Activated CD4-positive, alpha-beta T cell treated with anti-CD3 and anti-CD28 coated beads, Interleukin-2, amount 10 ng/mL, durations not matched to agents 24 days and 14 days (primary cell): ENCODE measurements at regions of chr15 and their contacts with region 1.

Region 1: DNA sequence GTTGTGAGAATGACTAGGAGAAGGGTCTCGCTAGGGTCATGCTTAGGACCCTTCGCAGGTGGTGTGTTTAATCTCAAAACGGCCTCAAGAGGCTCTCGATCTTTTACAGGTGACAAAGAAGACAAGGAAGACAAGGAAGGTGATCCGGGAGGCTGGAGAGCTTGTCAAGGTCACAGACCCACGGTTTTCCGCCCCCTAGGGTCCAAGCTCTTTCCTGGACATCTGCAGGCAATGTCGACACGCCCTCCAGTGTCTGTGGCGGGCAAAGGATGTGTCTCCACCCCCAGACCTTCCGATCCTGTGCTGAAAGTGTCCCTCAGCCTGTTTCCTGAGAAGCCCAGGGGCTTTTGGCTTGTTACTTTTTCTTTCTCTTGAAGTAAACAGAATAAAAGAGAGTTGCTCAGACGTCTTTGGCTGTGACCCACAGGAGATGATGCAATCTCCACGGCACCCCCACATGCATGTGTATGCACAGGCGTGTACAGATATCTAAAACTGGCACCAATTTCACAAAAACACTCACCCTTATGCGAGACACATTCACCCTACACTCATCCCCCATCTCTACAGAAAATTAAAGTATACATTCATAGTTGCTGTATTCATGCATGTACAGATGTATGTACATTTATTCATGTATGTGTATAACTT is 108.8 kb downstream of the KLF13 start:
- DNase-seq: peak; percentile 96
- H3K4me3 Mint-ChIP-seq: peak overlapping the region; percentile 79
- H3K27ac Mint-ChIP-seq: peak overlapping the region; percentile 96
- H3K4me1 Mint-ChIP-seq: peaks cover 78% of the 10 kb centered on the region
- H3K27me3 Mint-ChIP-seq: no peaks in the 10 kb centered on the region

Region 2: DNA sequence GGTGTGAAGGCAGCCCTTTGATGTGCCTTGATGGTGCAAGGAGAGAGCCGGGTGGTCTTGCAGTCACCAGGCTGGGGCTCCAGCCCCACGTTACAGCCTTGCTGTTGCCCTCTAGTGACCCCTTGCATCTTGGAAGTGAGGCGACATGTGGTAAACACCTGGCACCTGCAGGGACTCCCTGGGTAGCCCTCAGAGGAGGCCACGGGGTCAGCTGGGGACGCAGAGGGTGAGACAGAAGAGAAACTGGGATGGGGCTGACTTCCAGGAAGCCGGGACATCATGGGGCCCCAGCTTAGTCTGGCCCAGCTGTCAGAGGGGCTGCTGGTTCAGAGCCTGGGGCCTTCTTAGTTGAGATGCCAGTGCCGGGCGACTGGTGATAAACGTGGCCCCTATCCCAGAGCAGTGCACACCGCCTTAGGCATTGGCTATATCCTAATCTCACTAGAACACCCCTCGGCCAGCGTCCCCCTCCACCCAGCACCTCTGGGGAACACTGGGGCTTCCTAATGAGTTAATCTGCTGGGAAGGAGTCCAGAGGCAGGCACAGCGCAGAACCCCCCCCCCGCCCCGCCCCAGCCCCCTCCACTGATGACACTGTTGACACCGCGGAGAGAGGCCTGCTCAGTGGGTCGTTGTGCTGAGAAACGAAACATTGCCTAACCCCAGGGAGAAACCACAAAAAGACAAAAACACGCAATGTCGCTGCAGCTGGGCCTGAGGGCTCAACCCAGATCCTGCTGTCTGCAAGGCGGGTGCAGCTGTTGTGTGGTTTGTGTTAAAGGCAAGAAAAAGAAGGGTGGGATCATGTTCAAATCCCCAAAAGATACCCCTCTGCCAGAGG is 169.3 kb before region 1 on chr15:
- intact Hi-C with region 1: loop called (anchors 1 kb)
- DNase-seq: peak; percentile 94
- H3K4me3 Mint-ChIP-seq: peak overlapping the region; percentile 68
- H3K27ac Mint-ChIP-seq: peak overlapping the region; percentile 78
- H3K4me1 Mint-ChIP-seq: peaks cover 87% of the 10 kb centered on the region
- H3K27me3 Mint-ChIP-seq: no peaks in the 10 kb centered on the region

Region 3: GRCh38 chr15:31365655-31366127 is 69.7 kb before region 1 on chr15:
- intact Hi-C with region 1: loop called (anchors 1 kb)
- DNase-seq: peak; percentile 93
- H3K4me3 Mint-ChIP-seq: peak overlapping the region; percentile 83
- H3K27ac Mint-ChIP-seq: peak overlapping the region; percentile 98
- H3K4me1 Mint-ChIP-seq: peaks cover 94% of the 10 kb centered on the region
- H3K27me3 Mint-ChIP-seq: no peaks in the 10 kb centered on the region

Region 4: GRCh38 chr15:31458591-31459399 is 23.4 kb after region 1 on chr15:
- intact Hi-C with region 1: loop called (anchors 1 kb)
- DNase-seq: peak; percentile 85
- H3K4me3 Mint-ChIP-seq: peak overlapping the region; percentile 81
- H3K27ac Mint-ChIP-seq: peak overlapping the region; percentile 96
- H3K4me1 Mint-ChIP-seq: peaks cover 28% of the 10 kb centered on the region
- H3K27me3 Mint-ChIP-seq: no peaks in the 10 kb centered on the region

Region 5: DNA sequence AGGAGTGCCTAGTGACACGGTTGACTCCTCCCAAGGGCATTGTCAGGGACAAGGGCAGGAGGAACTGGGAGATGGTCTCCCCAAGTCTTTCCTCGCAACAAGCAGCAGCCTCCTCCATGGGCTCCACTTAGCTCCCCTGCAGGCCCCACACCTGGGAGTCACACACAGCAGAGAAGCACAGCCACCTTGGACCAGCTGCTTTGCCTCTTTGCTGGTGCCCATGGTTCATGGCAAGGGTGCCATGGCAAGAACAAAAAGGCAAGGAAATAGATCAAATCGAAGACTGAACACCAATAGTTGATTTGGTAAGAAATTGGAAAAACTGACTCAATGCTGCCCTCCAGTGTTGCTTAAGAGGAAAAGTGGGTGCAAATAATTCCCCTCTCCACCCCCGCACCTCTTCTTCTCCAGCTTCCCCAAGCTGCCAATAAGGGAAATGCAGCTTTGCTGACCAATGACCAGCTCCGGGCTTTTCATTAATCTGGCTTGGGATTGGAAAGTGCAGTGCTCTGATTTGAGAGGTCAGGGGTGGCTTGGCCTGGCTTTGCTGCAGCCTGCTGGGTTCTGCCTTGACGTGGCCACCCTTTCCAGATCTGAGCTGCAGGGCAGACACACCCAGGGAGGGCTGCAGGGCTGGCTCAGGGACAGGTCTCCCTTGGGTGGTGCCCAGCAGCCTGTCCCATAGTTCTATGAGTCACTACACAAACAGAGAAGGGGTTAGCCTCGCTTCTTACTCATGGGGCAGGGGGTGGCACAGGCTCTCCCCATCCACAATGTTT is 53.2 kb after region 1 on chr15:
- intact Hi-C with region 1: loop called (anchors 1 kb)
- DNase-seq: peak; percentile 82
- H3K4me3 Mint-ChIP-seq: peak overlapping the region; percentile 41
- H3K27ac Mint-ChIP-seq: peak overlapping the region; percentile 84
- H3K4me1 Mint-ChIP-seq: peaks cover 67% of the 10 kb centered on the region
- H3K27me3 Mint-ChIP-seq: no peaks in the 10 kb centered on the region